PC-9 (cell line): ENCODE measurements at regions of chr2 and their contacts with region 1.

Region 1: GRCh38 chr2:127649684-127650040 is 3.7 kb downstream of the GPR17 start:
- DNase-seq: peak; percentile 74 to 83
- H3K4me3 ChIP-seq: no peak overlapping the region
- H3K27ac ChIP-seq: no peak overlapping the region
- H3K4me1 ChIP-seq: no peaks in the 10 kb centered on the region; the same call in 1 of the 2 replicates
- H3K27me3 ChIP-seq: no peaks in the 10 kb centered on the region
- CTCF ChIP-seq: peak; percentile 97

Region 2: DNA sequence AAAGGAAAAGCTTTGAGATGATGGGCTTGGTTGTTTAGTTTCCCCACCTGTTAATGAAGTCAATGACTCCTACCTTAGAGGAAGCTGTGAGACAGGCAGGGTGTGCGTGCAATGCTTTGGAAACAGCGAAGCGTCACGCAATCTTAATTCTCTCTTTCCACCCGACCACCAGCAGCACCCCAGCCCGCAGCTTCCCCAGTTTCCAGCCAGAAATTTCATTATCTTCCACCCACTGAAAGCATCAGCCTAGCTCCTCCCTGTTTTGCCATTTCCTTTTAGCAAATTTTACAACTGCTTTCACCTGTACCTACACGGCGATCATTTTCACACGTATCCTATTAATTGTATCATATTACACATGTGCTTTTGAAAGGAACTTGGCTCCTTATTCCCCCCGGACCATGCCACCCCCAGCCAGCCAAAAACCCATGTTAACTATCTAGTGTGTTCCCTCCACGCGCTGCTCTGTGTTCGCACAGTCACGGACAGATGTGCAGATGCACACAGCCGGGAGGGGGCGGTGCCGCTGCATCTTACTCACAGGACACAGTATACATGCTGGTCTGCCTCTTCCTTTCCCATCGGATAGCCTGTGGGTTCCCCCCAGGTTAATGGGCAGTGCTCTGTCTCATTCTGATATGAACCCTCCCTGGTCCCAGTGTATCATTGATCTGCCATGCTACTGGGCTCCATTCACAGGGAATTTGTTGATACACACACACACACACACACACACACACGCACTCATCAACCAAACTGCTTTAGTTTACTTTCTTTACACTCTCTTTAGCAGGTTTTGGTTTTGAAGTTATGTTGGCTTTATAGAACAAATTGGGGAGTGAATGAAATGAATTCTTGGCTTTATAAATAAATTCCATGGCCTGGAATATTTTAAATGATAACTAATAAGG is 451.9 kb before region 1 on chr2:
- CTCF ChIA-PET with region 1: interaction called, 4 read pairs
- POLR2A ChIA-PET with region 1: no interaction called
- intact Hi-C with region 1: loop called (anchors 5 kb)
- DNase-seq: peak; percentile 71 to 83
- H3K4me3 ChIP-seq: no peak overlapping the region
- H3K27ac ChIP-seq: no peak overlapping the region
- H3K4me1 ChIP-seq: no peaks in the 10 kb centered on the region
- H3K27me3 ChIP-seq: no peaks in the 10 kb centered on the region
- CTCF ChIP-seq: peak; percentile 88

Region 3: DNA sequence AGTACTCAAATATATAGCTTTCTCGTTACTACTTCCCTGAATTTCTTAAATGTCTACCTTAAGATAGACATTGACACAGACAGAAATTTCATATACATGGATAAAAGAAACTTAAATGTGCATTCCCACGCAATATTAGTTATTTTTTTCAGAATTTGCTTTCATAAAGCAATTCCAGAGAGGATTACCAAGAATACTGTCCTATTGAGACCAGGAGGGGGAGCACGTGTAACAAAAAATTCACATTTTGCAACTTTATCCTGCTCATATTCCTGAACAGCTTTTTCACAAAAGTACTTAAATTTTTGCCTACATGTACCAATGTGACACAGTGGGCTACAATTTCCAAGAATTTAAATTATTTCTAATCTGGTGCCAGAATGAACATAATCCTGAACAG is 325.0 kb before region 1 on chr2:
- CTCF ChIA-PET with region 1: no interaction called
- POLR2A ChIA-PET with region 1: no interaction called
- intact Hi-C with region 1: loop called (anchors 10 kb)
- DNase-seq: peak; percentile 14 to 62
- H3K4me3 ChIP-seq: no peak overlapping the region
- H3K27ac ChIP-seq: no peak overlapping the region
- H3K4me1 ChIP-seq: no peaks in the 10 kb centered on the region
- H3K27me3 ChIP-seq: no peaks in the 10 kb centered on the region
- CTCF ChIP-seq: peak; percentile 91

Region 4: DNA sequence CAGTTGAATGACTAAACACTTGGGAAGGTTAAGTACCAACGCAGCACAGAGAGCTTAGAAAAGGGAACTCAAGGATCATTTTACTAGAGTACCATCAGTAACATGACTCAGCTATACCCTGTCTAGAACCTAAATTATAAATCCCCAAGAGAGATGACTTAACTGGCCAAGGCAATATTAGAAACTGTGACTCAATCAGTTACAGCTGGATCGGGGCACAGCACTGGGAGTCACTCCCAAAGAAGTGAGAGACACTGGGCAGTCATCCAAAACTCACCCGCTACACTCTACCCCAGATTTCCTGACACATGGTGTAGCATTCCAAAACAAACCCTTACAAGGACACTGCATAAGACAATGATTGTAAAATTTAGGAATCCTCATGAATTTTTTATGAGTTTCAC is 141.0 kb before region 1 on chr2:
- CTCF ChIA-PET with region 1: no interaction called
- POLR2A ChIA-PET with region 1: no interaction called
- intact Hi-C with region 1: loop called (anchors 5 kb)
- DNase-seq: peak; percentile 62 to 98
- H3K4me3 ChIP-seq: no peak overlapping the region
- H3K27ac ChIP-seq: peak overlapping the region; percentile 69
- H3K4me1 ChIP-seq: peaks cover 34% of the 10 kb centered on the region
- H3K27me3 ChIP-seq: no peaks in the 10 kb centered on the region
- CTCF ChIP-seq: no peak

Region 5: DNA sequence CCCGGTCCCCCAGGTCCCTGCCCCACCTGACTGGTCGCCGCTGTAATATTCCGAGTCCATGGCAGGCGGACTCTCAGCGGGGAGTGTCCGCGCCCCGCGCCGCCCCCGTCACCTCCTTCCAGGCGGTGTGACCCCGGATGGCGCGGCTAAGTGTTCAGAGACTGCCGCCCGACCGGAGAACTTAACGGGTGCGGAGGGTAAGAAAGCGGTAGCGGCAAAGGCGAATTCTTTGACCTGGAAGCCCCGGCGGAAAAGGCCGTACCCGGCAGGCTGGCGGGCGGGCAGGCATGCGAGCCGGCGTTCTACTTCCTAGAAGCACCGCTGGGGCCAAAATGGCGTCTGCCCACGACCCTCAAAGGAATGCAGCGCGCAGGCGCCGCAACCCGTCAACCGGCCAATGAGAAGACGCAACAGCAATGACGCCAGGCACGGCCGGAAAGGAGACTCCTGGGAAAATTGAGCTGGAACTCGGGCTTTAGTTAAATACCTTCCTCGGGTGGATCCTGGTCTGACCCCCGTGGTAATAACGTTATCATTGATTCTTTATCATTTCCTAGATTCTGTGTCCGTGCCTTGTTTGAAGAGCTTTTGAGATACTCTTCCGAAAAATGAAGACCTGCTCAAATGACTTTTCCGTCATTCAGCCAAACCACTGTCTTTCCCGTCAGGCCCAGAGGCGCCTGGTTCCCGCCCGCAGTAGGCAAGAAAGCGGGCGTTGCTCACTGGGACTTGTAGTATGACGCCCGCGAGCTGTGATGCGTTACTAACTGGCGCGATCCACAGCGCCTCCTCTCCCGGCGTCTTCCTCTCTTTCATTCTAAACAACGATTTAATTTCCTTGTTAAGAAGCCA is 123.3 kb before region 1 on chr2 and contains the start of gene IWS1:
- CTCF ChIA-PET with region 1: no interaction called
- POLR2A ChIA-PET with region 1: no interaction called
- intact Hi-C with region 1: loop called (anchors 1 kb)
- DNase-seq: peak; percentile 95
- H3K4me3 ChIP-seq: peak within 1 kb of the TSS; percentile 88
- H3K27ac ChIP-seq: peak within 1 kb of the TSS; percentile 97
- H3K4me1 ChIP-seq: peaks cover 43% of the 10 kb centered on the region
- H3K27me3 ChIP-seq: no peaks in the 10 kb centered on the region
- CTCF ChIP-seq: no peak; the same call in 1 of the 2 replicates
- total RNA-seq, gene IWS1: 47.3 and 51.3 TPM in 2 replicates

Region 6: GRCh38 chr2:127591221-127591923 is 58.3 kb before region 1 on chr2:
- CTCF ChIA-PET with region 1: interaction called, 15 read pairs
- POLR2A ChIA-PET with region 1: no interaction called
- intact Hi-C with region 1: loop called (anchors 1 kb)
- DNase-seq: peak in 1 of 2 experiments; percentile 62
- H3K4me3 ChIP-seq: no peak overlapping the region
- H3K27ac ChIP-seq: no peak overlapping the region
- H3K4me1 ChIP-seq: no peaks in the 10 kb centered on the region
- H3K27me3 ChIP-seq: peaks cover 8% of the 10 kb centered on the region; the same call in 1 of the 2 replicates
- CTCF ChIP-seq: peak; percentile 93

Region 7: DNA sequence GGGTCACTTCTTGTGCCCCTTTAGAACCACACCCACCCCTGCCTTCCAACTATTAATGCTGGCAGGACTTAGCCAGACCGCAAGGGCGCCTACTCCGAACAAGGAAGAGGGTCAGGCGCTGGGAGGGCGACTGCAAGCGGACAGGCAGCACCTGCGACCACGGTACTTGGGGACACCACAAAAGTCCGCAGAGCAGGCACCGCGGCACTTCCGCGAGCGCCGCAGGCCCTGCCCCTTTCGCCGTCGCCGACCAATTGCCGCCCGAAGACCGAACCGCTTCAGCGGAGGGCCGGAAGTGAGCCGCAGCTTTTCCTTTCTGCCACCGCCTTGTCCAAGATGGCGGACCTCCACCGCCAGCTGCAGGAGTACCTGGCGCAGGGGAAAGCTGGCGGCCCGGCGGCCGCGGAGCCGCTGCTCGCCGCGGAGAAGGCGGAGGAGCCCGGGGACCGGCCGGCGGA is 51.6 kb after region 1 on chr2 and contains the start of gene SFT2D3:
- CTCF ChIA-PET with region 1: interaction called, 3 read pairs
- POLR2A ChIA-PET with region 1: no interaction called
- intact Hi-C with region 1: loop called (anchors 2 kb)
- DNase-seq: peak; percentile 89 to 93
- H3K4me3 ChIP-seq: peak within 1 kb of the TSS; percentile 66
- H3K27ac ChIP-seq: peak within 1 kb of the TSS; percentile 94
- H3K4me1 ChIP-seq: peaks cover 32% of the 10 kb centered on the region
- H3K27me3 ChIP-seq: no peaks in the 10 kb centered on the region
- CTCF ChIP-seq: no peak
- total RNA-seq, gene SFT2D3: 7.3 and 8.4 TPM in 2 replicates

Region 8: GRCh38 chr2:127719301-127720218 is 69.9 kb after region 1 on chr2:
- CTCF ChIA-PET with region 1: no interaction called
- POLR2A ChIA-PET with region 1: no interaction called
- intact Hi-C with region 1: no loop called
- DNase-seq: no peak
- H3K4me3 ChIP-seq: no peak overlapping the region
- H3K27ac ChIP-seq: no peak overlapping the region
- H3K4me1 ChIP-seq: peaks cover 12% of the 10 kb centered on the region
- H3K27me3 ChIP-seq: no peaks in the 10 kb centered on the region
- CTCF ChIP-seq: no peak